Heart right ventricle (tissue), 16 donors: ENCODE measurements at regions of chr1 and their contacts with region 1.

Region 1: DNA sequence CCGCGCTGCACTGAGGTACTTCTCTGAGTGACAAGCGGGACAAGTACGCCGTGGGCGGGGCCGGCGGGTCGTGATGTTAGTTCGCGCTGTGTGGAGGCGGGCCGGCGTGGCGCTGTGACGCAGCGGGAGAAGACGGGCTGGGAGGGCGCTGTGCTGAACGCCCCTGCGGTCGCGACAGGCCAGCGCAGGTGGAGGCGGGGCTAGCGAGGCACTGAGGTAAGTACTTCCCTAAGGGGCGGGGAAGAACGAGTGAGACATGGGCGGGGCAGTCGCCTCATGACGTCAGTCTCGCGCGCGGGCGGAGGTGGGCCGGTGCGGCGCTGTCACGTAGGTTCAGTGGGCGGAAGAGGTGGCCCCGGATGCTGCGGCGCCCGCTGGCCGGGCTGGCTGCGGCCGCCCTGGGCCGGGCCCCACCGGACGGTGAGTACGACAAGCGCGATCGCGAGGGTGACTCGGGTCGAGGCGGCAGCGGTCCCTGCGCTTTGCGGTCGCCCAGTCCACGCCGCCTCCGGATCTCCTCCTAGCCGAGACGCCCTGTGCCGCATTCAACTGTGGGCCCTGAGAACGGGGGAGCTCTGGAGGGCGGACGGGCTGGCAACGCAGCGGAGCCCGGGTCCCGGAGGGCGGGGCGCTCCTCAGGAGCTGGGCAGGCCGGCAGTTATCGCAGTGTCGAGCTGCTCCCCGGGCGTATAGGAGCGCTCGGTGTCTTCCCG is at the start of gene GUK1:
- DNase-seq: peak; percentile 99 to 100
- ATAC-seq: peak; percentile 92 to 96 (median 94)
- H3K4me3 ChIP-seq: peak within 1 kb of the TSS; percentile 83 to 100 (median 95)
- H3K27ac ChIP-seq: peak within 1 kb of the TSS; percentile 97 to 100 (median 99)
- H3K4me1 ChIP-seq: peaks cover 25 to 47% (median 44%) of the 10 kb centered on the region in 9 donors
- H3K27me3 ChIP-seq: no peaks in the 10 kb centered on the region
- CTCF ChIP-seq: peak in 7 of 9 donors; percentile 11 to 57 (median 41)
- total RNA-seq, gene GUK1: 121 to 207 (median 159) TPM

Region 2: GRCh38 chr1:228082135-228082891 is 57.8 kb before region 1 on chr1 and contains the start of gene ARF1:
- intact Hi-C with region 1: no loop called
- DNase-seq: peak; percentile 90 to 94
- ATAC-seq: peak; percentile 92 to 97 (median 95)
- H3K4me3 ChIP-seq: peak within 1 kb of the TSS; percentile 71 to 100 (median 92)
- H3K27ac ChIP-seq: peak within 1 kb of the TSS; percentile 98 to 100 (median 100)
- H3K4me1 ChIP-seq: peaks cover 22 to 53% (median 49%) of the 10 kb centered on the region in 9 donors
- H3K27me3 ChIP-seq: no peaks in the 10 kb centered on the region
- CTCF ChIP-seq: peak in 4 of 9 donors; percentile 28 to 50 (median 39)
- total RNA-seq, gene ARF1: 262 to 372 (median 338) TPM

Region 3: DNA sequence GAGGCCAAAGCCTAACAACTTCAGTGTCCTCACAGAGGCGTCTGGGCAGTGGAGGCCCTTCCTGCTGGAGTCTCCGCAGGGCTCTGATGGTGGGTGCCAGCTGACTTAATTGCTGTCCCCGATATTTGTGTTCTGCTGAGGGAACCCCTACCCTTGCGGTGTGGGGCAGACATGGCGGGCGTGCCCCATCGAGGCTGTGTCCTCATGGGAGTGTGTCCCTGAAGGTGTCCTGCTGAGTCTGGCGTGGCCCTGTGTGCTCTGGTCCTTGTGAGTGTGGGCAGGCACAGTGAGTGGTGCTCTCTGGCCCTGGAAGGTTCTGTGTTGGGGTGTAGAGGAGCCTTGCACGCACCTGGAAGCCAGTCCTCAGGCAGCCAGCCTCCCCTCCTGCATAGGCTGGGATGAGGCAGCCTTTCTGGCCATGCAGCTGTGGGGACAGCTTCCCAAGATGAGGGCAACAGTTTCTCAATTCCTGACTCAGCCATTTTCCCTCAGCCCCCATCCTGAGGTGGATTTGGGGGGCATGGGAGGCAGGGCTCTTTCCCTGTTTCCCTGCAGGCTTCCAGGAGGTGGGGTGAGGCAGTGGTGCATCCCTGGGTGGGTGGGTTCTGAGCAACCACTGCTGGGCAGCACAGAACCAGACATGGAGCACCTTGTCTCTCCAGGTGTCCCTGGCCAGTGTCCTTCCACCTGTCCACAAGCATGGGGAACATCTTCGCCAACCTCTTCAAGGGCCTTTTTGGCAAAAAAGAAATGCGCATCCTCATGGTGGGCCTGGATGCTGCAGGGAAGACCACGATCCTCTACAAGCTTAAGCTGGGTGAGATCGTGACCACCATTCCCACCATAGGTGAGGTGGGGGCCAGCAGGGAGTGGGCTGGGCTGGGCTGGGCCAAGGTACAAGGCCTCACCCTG is 43.4 kb before region 1 on chr1:
- intact Hi-C with region 1: no loop called
- DNase-seq: no peak
- ATAC-seq: peak in 2 of 8 donors; percentile 2 to 9
- H3K4me3 ChIP-seq: no peak overlapping the region
- H3K27ac ChIP-seq: no peak overlapping the region
- H3K4me1 ChIP-seq: peaks cover 0 to 48% (median 36%) of the 10 kb centered on the region in 9 donors
- H3K27me3 ChIP-seq: no peaks in the 10 kb centered on the region
- CTCF ChIP-seq: no peak

Region 4: DNA sequence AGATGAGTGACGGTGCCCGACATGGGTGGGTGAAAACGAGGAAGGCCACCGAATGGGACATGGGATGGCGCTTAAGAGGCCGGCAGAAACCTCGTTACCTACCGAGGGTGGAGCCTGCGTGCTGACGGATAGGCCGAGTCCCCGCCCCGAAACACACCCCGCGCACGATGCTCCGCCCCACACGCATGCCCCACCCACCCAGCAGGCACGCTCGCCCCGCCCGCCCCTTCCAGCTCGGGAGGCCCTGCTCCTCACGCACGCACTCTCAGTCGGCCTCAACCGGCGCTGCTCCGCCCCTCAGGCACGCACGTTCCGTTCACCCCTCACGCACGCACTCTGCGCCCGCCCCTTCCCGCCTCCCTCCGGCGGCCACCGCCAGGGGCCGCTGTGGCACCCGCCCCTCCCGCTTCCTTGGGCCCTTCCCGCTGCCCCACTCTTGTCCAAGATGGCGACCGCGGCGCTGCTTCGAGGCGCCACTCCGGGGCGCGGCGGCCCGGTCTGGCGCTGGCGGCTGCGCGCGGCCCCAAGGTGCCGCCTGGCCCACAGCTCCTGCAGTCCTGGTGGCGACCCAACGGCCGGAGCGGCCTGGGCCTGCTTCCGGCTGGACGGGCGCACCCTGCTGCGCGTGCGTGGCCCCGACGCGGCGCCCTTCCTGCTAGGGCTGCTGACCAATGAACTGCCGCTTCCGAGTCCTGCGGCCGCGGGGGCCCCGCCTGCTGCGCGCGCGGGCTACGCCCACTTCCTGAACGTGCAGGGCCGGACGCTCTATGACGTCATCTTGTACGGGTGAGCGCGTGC is 25.5 kb after region 1 on chr1 and contains the start of gene IBA57:
- intact Hi-C with region 1: loop called in 6 of 10 experiments (anchors 1 to 2 kb)
- DNase-seq: peak; percentile 99 to 100
- ATAC-seq: peak; percentile 86 to 93 (median 90)
- H3K4me3 ChIP-seq: peak within 1 kb of the TSS; percentile 33 to 83 (median 78)
- H3K27ac ChIP-seq: peak within 1 kb of the TSS; percentile 94 to 100 (median 100)
- H3K4me1 ChIP-seq: peaks cover 16 to 59% (median 48%) of the 10 kb centered on the region in 9 donors
- H3K27me3 ChIP-seq: peaks cover 0 to 18% (median 0%) of the 10 kb centered on the region in 7 donors
- CTCF ChIP-seq: peak; percentile 81 to 99 (median 91)
- total RNA-seq, gene IBA57: 9.3 to 20.3 (median 17.2) TPM

Region 5: DNA sequence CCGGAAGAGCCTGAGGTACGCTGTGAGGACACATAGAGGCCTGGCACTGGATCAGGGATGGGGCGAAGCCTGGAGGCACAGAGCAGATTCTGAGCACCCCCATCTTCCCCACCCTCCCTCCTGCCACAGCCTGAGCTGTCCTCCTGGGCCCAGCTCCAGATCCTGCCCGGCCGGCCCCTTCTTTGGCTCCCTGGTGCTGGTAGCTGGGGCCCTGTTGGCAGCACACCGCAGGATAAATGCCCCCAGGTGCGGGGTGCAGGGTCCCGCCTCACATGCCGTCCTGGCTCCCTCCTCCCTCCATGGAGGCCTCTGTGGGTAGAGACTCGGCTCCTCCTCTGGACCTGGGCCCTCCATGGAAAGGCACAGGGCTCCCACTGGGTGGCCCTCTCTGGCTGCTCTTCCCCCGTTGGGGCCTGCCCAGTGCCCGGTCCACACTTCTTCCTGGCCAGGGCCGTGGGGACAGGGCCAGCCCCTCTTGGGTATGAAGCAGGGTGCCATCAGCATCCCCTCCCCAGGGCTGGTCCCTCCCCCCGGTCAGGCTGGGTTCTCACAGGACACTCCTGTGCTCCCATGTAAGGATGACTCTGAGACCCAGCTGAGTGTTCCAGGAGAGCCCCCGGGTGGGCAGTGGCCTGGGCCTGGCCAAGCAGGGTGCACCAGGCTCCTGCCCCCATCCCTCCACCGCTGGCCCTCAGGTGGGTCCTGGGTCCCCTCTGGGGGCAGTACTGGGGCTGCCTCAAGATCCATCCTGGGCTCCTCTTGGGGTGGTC is 66.7 kb after region 1 on chr1:
- intact Hi-C with region 1: loop called in 1 of 10 experiments (anchors 10 kb)
- DNase-seq: no peak
- ATAC-seq: peak in 5 of 8 donors; percentile 2 to 22 (median 14)
- H3K4me3 ChIP-seq: no peak overlapping the region
- H3K27ac ChIP-seq: peak overlapping the region; percentile 7 to 100 (median 94)
- H3K4me1 ChIP-seq: peaks cover 3 to 43% (median 27%) of the 10 kb centered on the region in 9 donors
- H3K27me3 ChIP-seq: peaks cover 0 to 7% (median 2%) of the 10 kb centered on the region in 7 donors
- CTCF ChIP-seq: peak in 1 of 9 donors; percentile 4

Region 6: GRCh38 chr1:228265167-228265566 is 125.1 kb after region 1 on chr1:
- intact Hi-C with region 1: loop called in 1 of 10 experiments (anchors 10 kb)
- DNase-seq: no peak
- ATAC-seq: no peak
- H3K4me3 ChIP-seq: no peak overlapping the region
- H3K27ac ChIP-seq: no peak overlapping the region
- H3K4me1 ChIP-seq: peaks cover 1 to 34% (median 17%) of the 10 kb centered on the region in 9 donors
- H3K27me3 ChIP-seq: no peaks in the 10 kb centered on the region
- CTCF ChIP-seq: peak in 3 of 9 donors; percentile 21 to 30 (median 24)

Region 7: DNA sequence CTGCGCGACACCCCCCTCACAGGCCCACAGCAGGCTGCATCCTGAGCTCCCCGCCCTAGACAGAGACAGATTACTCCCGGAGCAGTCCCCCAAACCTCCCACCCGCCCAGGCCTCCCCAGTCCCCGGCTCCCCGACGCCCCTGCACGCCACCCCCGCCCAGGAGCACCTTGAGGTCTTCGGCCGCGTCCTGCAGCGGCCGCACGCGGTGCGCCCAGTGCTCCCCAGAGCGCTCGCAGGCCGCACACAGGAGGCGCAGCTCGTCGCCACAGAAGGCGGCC is 265.8 kb after region 1 on chr1:
- intact Hi-C with region 1: loop called in 1 of 10 experiments (anchors 5 kb)
- DNase-seq: no peak
- ATAC-seq: peak in 4 of 8 donors; percentile 1 to 21 (median 14)
- H3K4me3 ChIP-seq: peak overlapping the region; percentile 71 to 100 (median 96)
- H3K27ac ChIP-seq: peak overlapping the region in 9 of 10 donors; percentile 78 to 96 (median 91)
- H3K4me1 ChIP-seq: peaks cover 6 to 48% (median 34%) of the 10 kb centered on the region in 9 donors
- H3K27me3 ChIP-seq: no peaks in the 10 kb centered on the region
- CTCF ChIP-seq: peak in 1 of 9 donors; percentile 8

Region 8: DNA sequence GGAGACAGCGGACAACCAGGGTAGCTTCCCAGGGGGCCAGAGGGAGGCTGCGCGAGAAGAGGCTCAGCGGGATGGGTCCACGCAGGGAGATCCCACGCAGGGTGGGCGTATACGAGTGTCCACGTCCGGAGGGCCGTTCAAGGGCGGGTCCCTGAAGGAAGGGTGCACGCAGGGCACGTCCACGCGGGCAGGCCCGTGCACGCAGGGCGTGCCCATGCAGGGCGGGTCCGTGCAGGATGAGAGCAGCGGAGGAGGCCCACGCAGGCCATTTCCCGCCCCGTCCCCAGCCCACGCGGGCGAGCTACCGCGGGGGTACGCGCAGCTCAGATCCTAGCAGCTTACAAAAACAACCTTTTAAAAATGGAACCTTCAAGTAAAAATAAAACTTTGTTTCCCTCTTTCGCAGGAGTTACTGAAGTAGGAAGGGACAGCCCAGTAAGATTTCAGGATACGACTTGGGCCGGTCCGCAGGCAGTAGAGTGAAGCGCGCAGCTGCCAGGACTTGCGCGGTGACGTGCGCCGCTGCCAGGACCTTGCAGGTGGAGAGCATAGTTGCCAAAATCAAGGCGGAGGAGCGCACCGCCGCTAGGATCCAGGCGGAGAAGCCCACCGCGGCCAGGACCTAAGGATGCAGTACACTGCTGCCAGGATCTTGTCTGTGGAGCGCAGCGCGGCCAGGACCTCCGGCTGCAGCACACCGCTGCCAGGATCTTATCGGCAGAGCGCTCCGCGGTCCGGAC is 346.7 kb after region 1 on chr1:
- intact Hi-C with region 1: loop called in 1 of 10 experiments (anchors 10 kb)
- DNase-seq: peak; percentile 72 to 84
- ATAC-seq: peak; percentile 85 to 94 (median 88)
- H3K4me3 ChIP-seq: peak overlapping the region; percentile 55 to 97 (median 82)
- H3K27ac ChIP-seq: peak overlapping the region; percentile 97 to 100 (median 100)
- H3K4me1 ChIP-seq: peaks cover 17 to 51% (median 40%) of the 10 kb centered on the region in 9 donors
- H3K27me3 ChIP-seq: no peaks in the 10 kb centered on the region
- CTCF ChIP-seq: no peak